Activated CD4-positive, alpha-beta T cell treated with anti-CD3 and anti-CD28 coated beads, Interleukin-2, amount 10 ng/mL, durations not matched to agents 24 days and 14 days (primary cell): ENCODE measurements at regions of chr20 and their contacts with region 1.

Region 1: GRCh38 chr20:15071085-15071808 is 733.8 kb upstream of the FLRT3 start:
- DNase-seq: no peak
- H3K4me3 Mint-ChIP-seq: no peak overlapping the region
- H3K27ac Mint-ChIP-seq: no peak overlapping the region
- H3K4me1 Mint-ChIP-seq: no peaks in the 10 kb centered on the region
- H3K27me3 Mint-ChIP-seq: no peaks in the 10 kb centered on the region

Region 2: GRCh38 chr20:15047042-15047441 is 24.2 kb before region 1 on chr20:
- intact Hi-C with region 1: no loop called
- DNase-seq: no peak
- H3K4me3 Mint-ChIP-seq: no peak overlapping the region
- H3K27ac Mint-ChIP-seq: no peak overlapping the region
- H3K4me1 Mint-ChIP-seq: no peaks in the 10 kb centered on the region
- H3K27me3 Mint-ChIP-seq: no peaks in the 10 kb centered on the region

Region 3: GRCh38 chr20:15100506-15101160 is 29.4 kb after region 1 on chr20:
- intact Hi-C with region 1: no loop called
- DNase-seq: no peak
- H3K4me3 Mint-ChIP-seq: no peak overlapping the region
- H3K27ac Mint-ChIP-seq: no peak overlapping the region
- H3K4me1 Mint-ChIP-seq: no peaks in the 10 kb centered on the region
- H3K27me3 Mint-ChIP-seq: no peaks in the 10 kb centered on the region

Region 4: DNA sequence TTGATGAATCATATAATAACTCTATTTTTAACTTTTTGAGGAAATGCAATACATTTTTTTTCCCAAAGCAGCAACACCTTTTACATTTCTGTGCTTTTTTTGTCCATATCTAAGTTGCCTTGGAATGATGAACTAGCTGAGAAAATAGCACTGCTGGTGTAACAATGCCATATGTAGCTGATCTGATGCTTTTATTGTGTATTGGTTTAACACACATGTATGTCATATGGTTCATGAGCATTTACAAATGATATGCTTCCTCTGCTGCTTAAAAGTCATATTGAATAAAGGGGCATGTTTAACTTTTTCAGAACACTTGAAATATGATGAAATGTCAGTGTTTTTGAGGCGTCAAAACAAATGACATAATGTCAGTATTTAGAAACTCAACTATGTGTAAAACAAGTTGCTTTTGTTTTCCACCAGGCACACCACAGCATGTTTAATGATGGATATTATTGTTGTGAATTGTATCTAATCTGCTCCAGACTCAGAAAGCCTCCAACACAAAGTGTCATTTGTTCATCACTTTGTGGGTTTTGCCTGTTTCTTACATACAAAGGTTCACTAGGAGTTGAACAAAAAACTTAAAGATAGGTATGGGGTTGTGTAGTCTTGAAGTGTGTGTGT is 42.0 kb after region 1 on chr20:
- intact Hi-C with region 1: no loop called
- DNase-seq: no peak
- H3K4me3 Mint-ChIP-seq: no peak overlapping the region
- H3K27ac Mint-ChIP-seq: no peak overlapping the region
- H3K4me1 Mint-ChIP-seq: no peaks in the 10 kb centered on the region
- H3K27me3 Mint-ChIP-seq: no peaks in the 10 kb centered on the region

Region 5: DNA sequence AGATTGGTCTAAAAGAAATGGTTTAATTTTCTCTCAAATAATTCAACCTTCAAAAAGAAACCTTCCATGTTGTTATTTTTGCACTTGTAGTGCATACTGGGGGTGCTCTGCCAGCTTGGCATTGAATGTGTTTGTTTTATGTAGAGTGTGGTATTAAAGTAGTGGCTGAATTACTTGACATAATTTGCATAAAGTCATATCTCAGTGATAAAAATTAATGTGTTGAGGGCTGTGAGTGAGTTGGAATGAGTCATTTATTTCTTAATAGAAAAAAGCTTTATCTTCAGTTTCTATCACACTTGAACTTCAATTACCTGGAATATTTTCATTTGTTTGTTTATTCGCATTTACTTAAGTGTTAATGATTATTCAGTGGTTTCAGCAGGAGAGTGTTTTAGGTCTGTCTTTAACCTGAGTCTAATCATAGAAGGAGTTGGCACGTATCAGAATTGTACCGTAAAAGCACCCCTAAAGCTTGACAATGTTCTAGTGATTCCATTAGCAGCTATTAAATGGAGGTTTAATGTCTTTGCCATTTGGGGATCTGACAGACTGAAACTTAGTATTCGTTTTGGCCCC is 67.4 kb after region 1 on chr20:
- intact Hi-C with region 1: loop called (anchors 10 kb)
- DNase-seq: no peak
- H3K4me3 Mint-ChIP-seq: no peak overlapping the region
- H3K27ac Mint-ChIP-seq: no peak overlapping the region
- H3K4me1 Mint-ChIP-seq: no peaks in the 10 kb centered on the region
- H3K27me3 Mint-ChIP-seq: no peaks in the 10 kb centered on the region